ENCODE measurements at regions of chr11 and their contacts with region 1.

Region 1: DNA sequence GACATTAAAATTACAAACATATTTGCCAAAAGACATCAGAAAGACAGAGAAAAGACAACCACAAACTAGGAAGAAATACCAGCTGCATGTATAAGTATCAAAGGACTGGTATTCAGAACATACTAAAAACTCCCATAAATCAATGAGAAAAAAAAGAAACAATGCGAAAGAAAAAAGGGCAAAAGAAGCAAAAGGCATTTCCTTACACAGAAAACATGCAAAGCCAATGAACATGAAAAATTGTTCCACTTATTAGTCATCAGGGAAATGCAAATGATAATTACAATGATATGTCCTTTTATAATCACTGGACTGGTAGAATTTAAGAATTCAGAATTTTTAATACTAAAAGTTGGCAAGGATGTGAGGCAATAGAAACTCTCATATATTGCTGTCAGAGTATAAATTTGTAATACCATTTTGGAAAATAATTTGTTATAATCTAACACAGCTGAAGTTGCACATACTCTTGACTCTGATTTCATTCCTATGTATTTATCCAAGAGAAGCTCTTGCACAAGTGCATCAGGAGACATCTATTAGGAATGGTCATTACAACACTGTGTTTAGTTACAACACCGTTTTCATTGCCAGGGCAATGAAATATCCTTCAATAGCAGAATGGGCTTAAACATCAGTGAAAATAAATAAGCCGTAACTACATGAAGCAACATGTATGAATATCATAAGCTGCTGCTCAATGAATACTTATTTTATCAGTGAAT is 279.7 kb downstream of the SWAP70 start:
- DNase-seq: peak; percentile 84
- H3K4me3 ChIP-seq: no peak overlapping the region
- H3K27ac ChIP-seq: no peak overlapping the region
- H3K27me3 ChIP-seq: no peaks in the 10 kb centered on the region
- CTCF ChIP-seq: no peak

Region 2: GRCh38 chr11:9859554-9860305 is 83.8 kb before region 1 on chr11:
- CTCF ChIA-PET with region 1: interaction called, 10 read pairs
- POLR2A ChIA-PET with region 1: no interaction called
- DNase-seq: no peak
- H3K4me3 ChIP-seq: no peak overlapping the region
- H3K27ac ChIP-seq: no peak overlapping the region
- H3K27me3 ChIP-seq: no peaks in the 10 kb centered on the region
- CTCF ChIP-seq: no peak

Region 3: DNA sequence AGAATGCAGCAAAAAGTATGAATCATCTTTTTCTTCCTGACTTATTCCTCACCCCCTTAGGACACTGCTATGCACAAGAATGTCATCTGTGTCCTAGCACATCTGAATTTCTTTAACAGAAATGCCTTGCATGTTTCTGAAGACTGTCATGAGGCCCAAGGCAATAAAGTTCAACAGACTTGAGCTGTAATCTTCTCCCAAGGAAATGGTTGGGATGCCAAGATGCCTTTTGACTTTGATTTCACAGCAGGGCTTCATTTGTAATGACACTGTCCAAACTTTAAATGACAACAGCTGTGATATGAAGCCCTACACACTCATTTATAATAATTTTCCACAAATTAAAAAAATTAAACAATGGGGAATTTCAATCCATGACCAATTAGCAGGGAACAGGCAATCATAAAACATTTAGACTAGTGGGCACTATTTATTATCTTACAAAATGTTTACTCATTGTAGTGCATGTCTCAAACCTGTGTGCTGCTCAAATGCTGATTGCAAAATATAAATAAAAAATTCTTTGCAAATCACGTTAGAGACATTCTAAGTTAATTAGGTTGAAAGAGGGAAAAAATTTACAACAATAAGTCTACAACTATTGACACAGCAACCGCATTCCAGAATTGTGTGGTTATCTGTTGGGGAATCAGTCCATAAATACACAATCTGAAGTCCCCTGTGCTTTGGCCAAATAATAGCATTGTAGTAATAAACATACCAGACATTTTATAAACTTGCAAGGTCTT is 37.3 kb before region 1 on chr11:
- CTCF ChIA-PET with region 1: no interaction called
- POLR2A ChIA-PET with region 1: interaction called, 12 read pairs
- DNase-seq: peak; percentile 79
- H3K4me3 ChIP-seq: no peak overlapping the region
- H3K27ac ChIP-seq: no peak overlapping the region
- H3K27me3 ChIP-seq: no peaks in the 10 kb centered on the region
- CTCF ChIP-seq: no peak